ENCODE measurements at regions of chr2 and their contacts with region 1.

Region 1: GRCh38 chr2:159712143-159712928 is at the start of gene MARCHF7:
- DNase-seq: peak; percentile 98
- ATAC-seq: peak; percentile 96
- H3K4me3 Mint-ChIP-seq: peak within 1 kb of the TSS; percentile 98
- H3K27ac Mint-ChIP-seq: peak within 1 kb of the TSS; percentile 100
- H3K4me1 Mint-ChIP-seq: peaks cover 42% of the 10 kb centered on the region
- H3K27me3 Mint-ChIP-seq: no peaks in the 10 kb centered on the region
- total RNA-seq, gene MARCHF7: 78.3 to 83.1 TPM

Region 2: DNA sequence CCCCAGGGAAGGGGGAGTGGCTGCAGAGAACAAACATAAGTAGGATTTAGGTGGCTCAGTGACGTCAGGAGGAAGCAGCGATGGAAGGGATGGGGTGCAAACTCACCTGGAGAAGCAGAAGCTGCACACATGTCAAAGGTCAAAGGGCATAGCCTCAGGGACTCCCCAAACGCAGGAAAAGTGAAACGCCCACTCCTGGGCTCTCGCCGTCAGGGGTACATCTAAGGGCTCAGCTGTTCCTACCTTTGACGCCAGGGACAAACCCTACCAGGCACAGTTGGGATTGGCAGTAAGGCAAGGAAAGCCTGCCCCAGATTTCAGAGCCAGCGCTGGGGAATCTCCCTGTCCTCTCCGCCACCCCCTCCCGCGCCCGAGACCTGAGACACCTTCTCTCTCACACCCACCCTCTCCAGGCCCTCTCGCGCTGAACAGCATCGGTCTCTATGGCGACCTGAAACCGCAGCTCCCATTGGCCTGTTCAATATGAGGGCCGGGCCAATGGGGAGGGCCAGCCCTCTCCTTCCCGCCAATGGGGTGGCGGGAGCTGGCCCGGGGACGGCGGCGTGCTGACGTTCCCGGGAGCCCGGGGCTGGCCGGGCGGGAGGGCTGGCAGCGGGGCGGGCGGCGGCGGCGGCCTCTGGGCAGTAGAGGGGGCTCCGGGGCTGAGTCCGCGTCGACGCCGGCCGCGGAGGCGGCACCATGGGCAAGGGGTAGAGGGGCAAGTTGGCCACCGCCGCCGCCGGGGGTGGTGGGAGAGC is 1255.8 kb before region 1 on chr2 and contains the starts of genes CCDC148 and PKP4:
- CTCF ChIA-PET with region 1: no interaction called
- POLR2A ChIA-PET with region 1: no interaction called
- intact Hi-C with region 1: loop called in 1 of 2 experiments (anchors 5 kb)
- DNase-seq: peak; percentile 95
- ATAC-seq: peak; percentile 97
- H3K4me3 Mint-ChIP-seq: peak within 1 kb of the TSS; percentile 92
- H3K27ac Mint-ChIP-seq: peak within 1 kb of the TSS; percentile 72
- H3K4me1 Mint-ChIP-seq: peaks cover 25% of the 10 kb centered on the region
- H3K27me3 Mint-ChIP-seq: peaks cover 5% of the 10 kb centered on the region
- total RNA-seq, gene CCDC148: 0.23 to 0.26 TPM
- total RNA-seq, gene PKP4: 39.2 to 58.4 TPM

Region 3: DNA sequence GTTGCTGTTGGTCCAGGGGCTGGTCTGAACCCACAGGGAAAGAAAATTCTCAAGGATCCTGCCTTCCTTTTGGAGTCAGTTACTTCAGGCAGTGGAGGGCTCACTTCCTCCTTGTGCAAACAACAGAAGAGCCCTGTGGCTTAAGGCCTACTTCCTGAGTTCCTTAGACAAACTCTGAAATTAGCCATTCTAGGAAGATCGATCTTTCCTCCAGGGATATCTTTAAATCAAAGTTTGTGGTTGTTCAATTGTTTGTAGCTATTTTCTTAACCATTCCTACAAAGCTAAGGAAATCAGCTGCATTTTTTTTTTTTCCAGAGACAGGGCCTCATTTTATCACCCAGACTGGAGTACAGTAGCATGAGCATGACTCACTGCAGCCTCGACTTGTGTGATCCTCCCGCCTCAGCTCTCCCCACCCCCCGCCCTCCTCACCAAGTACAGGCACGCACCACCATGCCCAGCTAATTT is 587.9 kb before region 1 on chr2:
- CTCF ChIA-PET with region 1: no interaction called
- POLR2A ChIA-PET with region 1: no interaction called
- intact Hi-C with region 1: loop called in 1 of 2 experiments (anchors 1 kb)
- DNase-seq: peak; percentile 45
- ATAC-seq: peak; percentile 89
- H3K4me3 Mint-ChIP-seq: no peak overlapping the region
- H3K27ac Mint-ChIP-seq: peak overlapping the region; percentile 63
- H3K4me1 Mint-ChIP-seq: peaks cover 17% of the 10 kb centered on the region
- H3K27me3 Mint-ChIP-seq: no peaks in the 10 kb centered on the region

Region 4: GRCh38 chr2:159516241-159516766 is 196.0 kb before region 1 on chr2:
- CTCF ChIA-PET with region 1: no interaction called
- POLR2A ChIA-PET with region 1: no interaction called
- intact Hi-C with region 1: loop called (anchors 1 to 5 kb)
- DNase-seq: peak; percentile 10
- ATAC-seq: peak; percentile 91
- H3K4me3 Mint-ChIP-seq: peak overlapping the region; percentile 73
- H3K27ac Mint-ChIP-seq: peak overlapping the region; percentile 83
- H3K4me1 Mint-ChIP-seq: peaks cover 19% of the 10 kb centered on the region
- H3K27me3 Mint-ChIP-seq: no peaks in the 10 kb centered on the region

Region 5: DNA sequence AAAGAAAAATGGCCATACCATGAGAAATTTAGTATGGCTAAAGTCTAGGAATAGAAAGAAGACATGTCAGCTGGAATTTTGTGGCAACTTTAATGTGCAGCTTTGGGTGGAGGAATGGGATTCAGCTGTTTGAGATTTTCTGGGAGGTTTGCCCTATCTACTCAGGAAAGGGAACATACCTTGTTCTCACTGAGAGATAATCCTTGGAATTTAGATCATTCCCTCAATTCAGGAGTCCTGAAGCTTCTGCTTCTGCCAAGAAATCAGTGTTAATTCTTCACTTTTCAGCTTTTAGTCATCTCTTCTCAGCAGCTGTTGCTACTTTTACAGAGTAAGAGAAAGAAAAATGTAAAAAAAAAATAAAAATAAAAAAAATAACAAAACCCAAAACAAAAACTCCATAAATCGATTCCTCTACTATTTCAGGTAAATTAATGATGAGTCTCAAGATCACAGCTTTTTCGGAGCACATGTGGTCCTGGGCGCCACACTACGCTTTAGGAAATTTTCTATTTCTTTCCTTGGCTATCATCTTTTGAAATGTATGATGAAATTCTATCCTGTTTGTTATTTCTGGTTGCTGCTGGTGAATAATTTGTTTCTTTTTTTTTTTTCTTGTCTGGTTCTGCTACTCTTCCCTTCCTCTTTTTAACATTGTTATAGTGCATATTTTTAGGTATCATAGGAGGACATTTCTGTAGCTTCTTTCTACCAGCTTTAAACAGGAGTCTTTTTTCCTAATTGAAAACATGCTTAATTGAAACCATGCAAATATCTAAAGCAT is 77.1 kb before region 1 on chr2:
- CTCF ChIA-PET with region 1: no interaction called
- POLR2A ChIA-PET with region 1: no interaction called
- intact Hi-C with region 1: no loop called
- DNase-seq: no peak
- ATAC-seq: no peak
- H3K4me3 Mint-ChIP-seq: no peak overlapping the region
- H3K27ac Mint-ChIP-seq: no peak overlapping the region
- H3K4me1 Mint-ChIP-seq: no peaks in the 10 kb centered on the region
- H3K27me3 Mint-ChIP-seq: no peaks in the 10 kb centered on the region

Region 6: GRCh38 chr2:159755788-159756187 is 43.5 kb after region 1 on chr2:
- CTCF ChIA-PET with region 1: interaction called, 4 read pairs
- POLR2A ChIA-PET with region 1: interaction called, 5 read pairs
- intact Hi-C with region 1: loop called (anchors 1 to 5 kb)
- DNase-seq: peak; percentile 41
- ATAC-seq: peak; percentile 100
- H3K4me3 Mint-ChIP-seq: no peak overlapping the region
- H3K27ac Mint-ChIP-seq: no peak overlapping the region
- H3K4me1 Mint-ChIP-seq: peaks cover 9% of the 10 kb centered on the region
- H3K27me3 Mint-ChIP-seq: no peaks in the 10 kb centered on the region

Region 7: GRCh38 chr2:159904127-159904958 is 192.0 kb after region 1 on chr2:
- CTCF ChIA-PET with region 1: no interaction called
- POLR2A ChIA-PET with region 1: no interaction called
- intact Hi-C with region 1: loop called (anchors 1 to 5 kb)
- DNase-seq: peak; percentile 91
- ATAC-seq: peak; percentile 76
- H3K4me3 Mint-ChIP-seq: peak within 1 kb of the TSS; percentile 93
- H3K27ac Mint-ChIP-seq: peak within 1 kb of the TSS; percentile 97
- H3K4me1 Mint-ChIP-seq: peaks cover 73% of the 10 kb centered on the region
- H3K27me3 Mint-ChIP-seq: no peaks in the 10 kb centered on the region

Region 8: GRCh38 chr2:160139991-160140390 is 427.7 kb after region 1 on chr2:
- CTCF ChIA-PET with region 1: no interaction called
- POLR2A ChIA-PET with region 1: no interaction called
- intact Hi-C with region 1: no loop called
- DNase-seq: no peak
- ATAC-seq: no peak
- H3K4me3 Mint-ChIP-seq: no peak overlapping the region
- H3K27ac Mint-ChIP-seq: no peak overlapping the region
- H3K4me1 Mint-ChIP-seq: peaks cover 3% of the 10 kb centered on the region
- H3K27me3 Mint-ChIP-seq: peaks cover 3% of the 10 kb centered on the region

Region 9: GRCh38 chr2:160294339-160294803 is 582.0 kb after region 1 on chr2:
- CTCF ChIA-PET with region 1: no interaction called
- POLR2A ChIA-PET with region 1: no interaction called
- intact Hi-C with region 1: loop called in 1 of 2 experiments (anchors 5 kb)
- DNase-seq: peak; percentile 69
- ATAC-seq: peak; percentile 93
- H3K4me3 Mint-ChIP-seq: no peak overlapping the region
- H3K27ac Mint-ChIP-seq: peak overlapping the region; percentile 88
- H3K4me1 Mint-ChIP-seq: peaks cover 86% of the 10 kb centered on the region
- H3K27me3 Mint-ChIP-seq: no peaks in the 10 kb centered on the region

Measured in activated CD4-positive, alpha-beta T cell treated with anti-CD3 and anti-CD28 coated beads for 36 hours (primary cell).